Activated CD4-positive, alpha-beta T cell treated with anti-CD3 and anti-CD28 coated beads for 36 hours (primary cell): ENCODE measurements at regions of chr14 and their contacts with region 1.

Region 1: GRCh38 chr14:54712465-54713200 is 145.7 kb downstream of the SAMD4A start:
- DNase-seq: no peak
- ATAC-seq: no peak
- H3K4me3 Mint-ChIP-seq: no peak overlapping the region
- H3K27ac Mint-ChIP-seq: no peak overlapping the region
- H3K4me1 Mint-ChIP-seq: peaks cover 18% of the 10 kb centered on the region
- H3K27me3 Mint-ChIP-seq: peaks cover 8% of the 10 kb centered on the region

Region 2: GRCh38 chr14:54108481-54109471 is 603.9 kb before region 1 on chr14:
- CTCF ChIA-PET with region 1: no interaction called
- POLR2A ChIA-PET with region 1: no interaction called
- intact Hi-C with region 1: no loop called
- DNase-seq: no peak
- ATAC-seq: no peak
- H3K4me3 Mint-ChIP-seq: no peak overlapping the region
- H3K27ac Mint-ChIP-seq: no peak overlapping the region
- H3K4me1 Mint-ChIP-seq: no peaks in the 10 kb centered on the region
- H3K27me3 Mint-ChIP-seq: peaks cover 3% of the 10 kb centered on the region

Region 3: DNA sequence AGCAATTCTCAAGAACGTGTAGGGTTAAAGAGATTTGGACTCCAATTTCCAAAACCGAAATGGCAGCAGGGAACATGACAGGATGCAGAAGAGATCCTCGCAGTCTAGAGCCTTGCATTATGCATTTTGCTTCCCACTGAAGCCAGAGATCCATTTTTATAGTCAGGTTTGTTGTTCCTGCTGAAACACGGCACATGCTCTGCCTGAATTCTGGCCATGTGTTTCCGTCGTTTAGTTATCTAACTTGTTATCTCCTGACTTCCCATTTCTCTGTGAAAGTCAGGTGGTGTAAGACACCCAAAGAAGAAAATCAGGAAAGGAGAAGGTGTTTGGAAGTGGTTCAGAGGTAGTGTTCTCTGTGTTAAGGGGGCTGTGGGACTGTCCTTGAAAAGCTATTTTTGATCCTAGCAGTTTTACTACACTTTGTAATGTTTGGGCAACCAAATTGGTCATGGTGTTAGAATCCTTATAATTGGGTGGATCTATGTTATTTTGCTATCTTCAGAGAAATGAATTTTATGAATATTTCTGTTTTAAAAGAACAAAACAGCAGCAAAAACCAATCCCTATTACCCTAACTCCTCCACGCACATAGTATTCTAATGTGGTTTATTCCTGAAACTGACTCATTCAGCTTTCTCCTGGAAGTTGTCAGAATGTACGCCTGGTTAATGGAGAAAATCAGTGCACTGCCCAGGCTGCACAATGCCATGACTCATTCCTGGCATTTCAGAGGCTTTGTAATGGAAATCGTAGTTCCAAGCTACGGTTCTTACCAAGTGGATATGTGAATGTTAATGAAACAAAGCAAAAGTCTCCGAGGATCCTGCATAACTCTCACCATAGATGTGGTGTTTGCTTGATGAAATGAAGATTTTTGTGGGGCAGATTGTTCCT is 35.6 kb before region 1 on chr14:
- CTCF ChIA-PET with region 1: no interaction called
- POLR2A ChIA-PET with region 1: no interaction called
- intact Hi-C with region 1: no loop called
- DNase-seq: no peak
- ATAC-seq: no peak
- H3K4me3 Mint-ChIP-seq: no peak overlapping the region
- H3K27ac Mint-ChIP-seq: no peak overlapping the region
- H3K4me1 Mint-ChIP-seq: peaks cover 13% of the 10 kb centered on the region
- H3K27me3 Mint-ChIP-seq: peaks cover 15% of the 10 kb centered on the region

Region 4: DNA sequence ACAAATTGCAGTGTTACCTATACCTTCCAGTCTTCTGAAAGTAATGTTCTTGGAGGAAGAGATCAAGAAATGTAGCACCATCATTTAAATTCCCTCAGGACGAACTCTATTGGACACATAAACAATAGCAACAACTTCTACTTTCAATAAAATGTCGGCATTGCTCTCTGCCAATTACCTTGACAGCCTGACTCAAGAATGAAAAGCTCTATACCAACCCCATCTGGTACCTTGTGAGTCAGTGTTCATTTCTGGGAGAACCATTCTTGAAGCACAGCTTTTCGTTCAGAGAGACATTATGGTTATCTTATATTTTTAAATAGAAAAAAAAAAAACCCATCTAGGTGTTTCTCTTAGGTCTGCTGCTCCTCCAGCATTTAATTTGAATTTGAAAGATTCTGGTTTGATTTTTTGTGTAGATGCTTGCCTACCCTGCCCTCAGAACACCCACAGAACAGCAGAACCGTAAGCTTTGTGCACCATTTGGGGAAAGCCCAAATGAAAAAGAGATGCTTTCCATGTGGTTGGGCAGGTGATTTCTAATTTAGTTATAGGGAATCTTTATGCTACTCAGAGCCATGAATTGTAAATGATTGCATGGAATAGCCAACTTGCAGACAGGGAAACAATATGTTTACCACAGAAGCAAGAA is 10.3 kb after region 1 on chr14:
- CTCF ChIA-PET with region 1: interaction called, 16 read pairs
- POLR2A ChIA-PET with region 1: interaction called, 3 read pairs
- intact Hi-C with region 1: no loop called
- DNase-seq: no peak
- ATAC-seq: peak; percentile 84
- H3K4me3 Mint-ChIP-seq: no peak overlapping the region
- H3K27ac Mint-ChIP-seq: no peak overlapping the region
- H3K4me1 Mint-ChIP-seq: peaks cover 6% of the 10 kb centered on the region
- H3K27me3 Mint-ChIP-seq: peaks cover 26% of the 10 kb centered on the region